ENCODE measurements at regions of chr19 and their contacts with region 1.

Region 1: DNA sequence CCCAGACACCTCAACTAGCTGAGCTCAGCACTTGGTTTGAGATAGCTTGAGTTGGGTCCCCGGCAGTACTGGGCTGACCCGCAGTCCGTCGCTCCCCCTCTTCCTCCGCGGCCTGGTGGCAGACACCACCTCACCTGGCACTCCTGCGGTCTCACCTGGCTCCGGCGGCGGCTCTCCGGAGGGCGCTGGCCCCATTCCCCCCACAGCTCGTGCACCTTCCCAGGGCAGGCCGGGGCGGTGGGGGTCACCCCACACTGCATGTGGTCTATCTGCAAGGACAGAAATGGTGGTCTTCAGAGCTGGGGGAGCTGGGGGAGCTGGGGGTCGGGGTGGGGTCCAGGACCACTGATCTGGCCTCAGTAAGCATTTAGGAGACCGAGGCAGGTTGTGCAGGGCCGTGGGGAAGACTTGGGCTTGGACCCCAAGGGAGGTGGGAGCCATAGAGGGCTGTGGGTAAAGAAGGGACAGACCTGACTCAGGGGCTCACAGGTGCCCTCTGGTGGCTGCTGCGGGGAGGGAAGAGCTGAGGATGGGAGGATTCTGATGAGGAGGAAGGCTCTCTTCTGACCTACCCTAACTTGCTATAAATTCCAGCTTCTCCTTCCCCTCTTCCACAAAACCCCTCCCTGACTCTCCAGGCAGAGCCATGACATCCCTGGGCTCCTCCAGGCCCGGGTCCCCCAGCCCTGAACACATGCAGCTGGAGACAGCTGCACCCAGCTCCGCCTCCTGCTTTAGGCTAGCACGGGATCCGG is 6.7 kb upstream of the PLIN4 start:
- DNase-seq: peak; percentile 60
- H3K4me3 Mint-ChIP-seq: no peak overlapping the region
- H3K27ac Mint-ChIP-seq: no peak overlapping the region
- H3K4me1 Mint-ChIP-seq: peaks cover 9% of the 10 kb centered on the region
- H3K27me3 Mint-ChIP-seq: peaks cover 8% of the 10 kb centered on the region
- CTCF ChIP-seq: peak; percentile 63

Region 2: DNA sequence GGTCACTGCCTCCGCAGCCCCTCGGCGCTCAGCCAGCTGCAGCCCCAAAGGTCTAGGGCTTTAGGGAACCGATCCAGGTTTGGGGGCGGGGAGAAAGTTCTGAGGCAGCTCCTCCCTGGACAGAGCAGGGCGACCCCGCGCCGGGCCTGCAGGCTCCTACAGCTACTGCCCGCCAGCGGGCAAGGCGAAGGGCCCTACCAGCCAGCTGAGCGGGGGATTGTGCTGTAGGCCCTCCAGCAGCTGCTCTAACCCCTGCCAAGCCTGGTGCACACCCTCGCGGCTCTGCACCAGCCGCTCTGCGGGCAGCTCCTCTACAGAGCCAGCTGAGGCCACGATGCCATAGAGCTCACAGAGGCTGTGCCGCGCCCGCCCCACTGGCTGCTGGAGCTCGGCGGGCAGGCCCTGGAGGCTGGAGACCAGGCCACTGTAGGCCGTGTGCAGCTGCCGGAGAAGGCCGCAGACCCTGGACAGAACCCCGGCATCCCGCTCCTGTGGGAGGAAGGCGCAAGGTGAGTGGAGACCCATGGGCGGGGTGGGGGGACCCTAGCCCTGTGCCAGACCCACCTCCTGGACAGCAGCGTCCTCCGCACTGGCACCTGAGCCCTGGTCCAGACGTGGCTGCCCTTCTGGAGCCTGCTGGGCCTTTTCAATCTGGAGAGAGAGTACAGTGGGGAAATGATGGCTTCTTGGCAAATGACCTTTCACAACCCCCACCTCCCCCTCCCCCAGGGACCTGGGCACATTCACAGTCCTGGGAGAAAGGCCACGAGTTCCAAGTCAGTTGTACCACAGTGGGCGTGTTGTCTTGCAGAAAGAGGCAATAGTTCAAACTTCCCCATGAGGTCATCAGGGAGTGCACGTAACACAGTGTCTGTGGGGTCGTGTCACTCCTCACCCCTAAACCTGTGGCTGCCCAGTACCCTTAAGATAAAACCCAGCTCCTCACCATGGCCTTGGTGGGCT is 20.4 kb before region 1 on chr19:
- CTCF ChIA-PET with region 1: interaction called, 12 read pairs
- POLR2A ChIA-PET with region 1: no interaction called
- intact Hi-C with region 1: no loop called
- DNase-seq: no peak
- H3K4me3 Mint-ChIP-seq: no peak overlapping the region
- H3K27ac Mint-ChIP-seq: no peak overlapping the region
- H3K4me1 Mint-ChIP-seq: peaks cover 10% of the 10 kb centered on the region
- H3K27me3 Mint-ChIP-seq: no peaks in the 10 kb centered on the region
- CTCF ChIP-seq: no peak

Region 3: GRCh38 chr19:4534836-4535658 is 10.1 kb after region 1 on chr19 and contains the start of gene PLIN5:
- CTCF ChIA-PET with region 1: interaction called, 51 read pairs
- POLR2A ChIA-PET with region 1: interaction called, 3 read pairs
- intact Hi-C with region 1: no loop called
- DNase-seq: peak; percentile 32
- H3K4me3 Mint-ChIP-seq: no peak within 1 kb of the TSS
- H3K27ac Mint-ChIP-seq: no peak within 1 kb of the TSS
- H3K4me1 Mint-ChIP-seq: no peaks in the 10 kb centered on the region
- H3K27me3 Mint-ChIP-seq: peaks cover 4% of the 10 kb centered on the region
- CTCF ChIP-seq: no peak
- total RNA-seq, gene PLIN5: not detected in 2 replicates

Region 4: GRCh38 chr19:4547303-4548237 is 22.6 kb after region 1 on chr19:
- CTCF ChIA-PET with region 1: interaction called, 13 read pairs
- POLR2A ChIA-PET with region 1: no interaction called
- intact Hi-C with region 1: no loop called
- DNase-seq: peak; percentile 54
- H3K4me3 Mint-ChIP-seq: no peak overlapping the region
- H3K27ac Mint-ChIP-seq: no peak overlapping the region
- H3K4me1 Mint-ChIP-seq: no peaks in the 10 kb centered on the region
- H3K27me3 Mint-ChIP-seq: peaks cover 13% of the 10 kb centered on the region
- CTCF ChIP-seq: peak; percentile 40

Region 5: GRCh38 chr19:4597975-4598671 is 73.1 kb after region 1 on chr19:
- CTCF ChIA-PET with region 1: no interaction called
- POLR2A ChIA-PET with region 1: no interaction called
- intact Hi-C with region 1: no loop called
- DNase-seq: peak; percentile 66
- H3K4me3 Mint-ChIP-seq: peak overlapping the region; percentile 52
- H3K27ac Mint-ChIP-seq: no peak overlapping the region
- H3K4me1 Mint-ChIP-seq: no peaks in the 10 kb centered on the region
- H3K27me3 Mint-ChIP-seq: no peaks in the 10 kb centered on the region
- CTCF ChIP-seq: no peak